Kidney (tissue), 22 donors: ENCODE measurements at regions of chr12 and their contacts with region 1.

Region 1: DNA sequence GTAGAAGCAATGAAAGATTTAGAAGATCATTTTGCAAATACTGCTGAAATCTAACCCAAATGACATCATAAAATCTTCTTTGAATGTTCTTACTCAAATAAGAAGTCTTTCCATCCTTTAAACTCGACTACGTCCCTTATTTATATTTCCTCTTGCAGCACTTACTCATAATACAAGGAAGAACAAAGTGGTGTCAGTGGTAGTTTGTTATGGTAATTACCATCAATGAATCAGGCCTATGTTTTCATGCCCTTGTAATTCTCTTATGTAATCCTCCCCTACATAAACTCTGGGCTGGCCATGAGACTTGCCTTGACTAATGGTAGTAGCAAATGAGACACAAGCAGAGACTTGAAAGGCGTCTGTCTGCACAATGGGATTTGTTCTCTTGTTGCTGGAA is 17.0 kb downstream of the EEA1 start:
- DNase-seq: no peak
- H3K4me3 ChIP-seq: no peak overlapping the region
- H3K27ac ChIP-seq: no peak overlapping the region
- H3K4me1 ChIP-seq: peaks cover 0 to 6% (median 0%) of the 10 kb centered on the region in 3 donors
- H3K27me3 ChIP-seq: no peaks in the 10 kb centered on the region
- CTCF ChIP-seq: no peak

Region 2: GRCh38 chr12:92859650-92860386 is 52.2 kb before region 1 on chr12:
- intact Hi-C with region 1: loop called (anchors 10 kb)
- DNase-seq: peak in 2 of 5 donors; percentile 7 to 10
- H3K4me3 ChIP-seq: no peak overlapping the region
- H3K27ac ChIP-seq: no peak overlapping the region
- H3K4me1 ChIP-seq: no peaks in the 10 kb centered on the region
- H3K27me3 ChIP-seq: no peaks in the 10 kb centered on the region
- CTCF ChIP-seq: no peak